Ascending aorta (tissue), 2 donors: ENCODE measurements at regions of chr12 and their contacts with region 1.

Region 1: GRCh38 chr12:110583137-110584059 is at the start of gene PPTC7:
- DNase-seq: peak; percentile 92 to 98
- H3K4me3 ChIP-seq: peak within 1 kb of the TSS; percentile 96 to 99
- H3K27ac ChIP-seq: peak within 1 kb of the TSS; percentile 85 to 96
- H3K4me1 ChIP-seq: peaks cover 8 to 38% of the 10 kb centered on the region in 2 donors
- H3K27me3 ChIP-seq: no peaks in the 10 kb centered on the region
- CTCF ChIP-seq: no peak
- total RNA-seq, gene PPTC7: 12.3 TPM

Region 2: DNA sequence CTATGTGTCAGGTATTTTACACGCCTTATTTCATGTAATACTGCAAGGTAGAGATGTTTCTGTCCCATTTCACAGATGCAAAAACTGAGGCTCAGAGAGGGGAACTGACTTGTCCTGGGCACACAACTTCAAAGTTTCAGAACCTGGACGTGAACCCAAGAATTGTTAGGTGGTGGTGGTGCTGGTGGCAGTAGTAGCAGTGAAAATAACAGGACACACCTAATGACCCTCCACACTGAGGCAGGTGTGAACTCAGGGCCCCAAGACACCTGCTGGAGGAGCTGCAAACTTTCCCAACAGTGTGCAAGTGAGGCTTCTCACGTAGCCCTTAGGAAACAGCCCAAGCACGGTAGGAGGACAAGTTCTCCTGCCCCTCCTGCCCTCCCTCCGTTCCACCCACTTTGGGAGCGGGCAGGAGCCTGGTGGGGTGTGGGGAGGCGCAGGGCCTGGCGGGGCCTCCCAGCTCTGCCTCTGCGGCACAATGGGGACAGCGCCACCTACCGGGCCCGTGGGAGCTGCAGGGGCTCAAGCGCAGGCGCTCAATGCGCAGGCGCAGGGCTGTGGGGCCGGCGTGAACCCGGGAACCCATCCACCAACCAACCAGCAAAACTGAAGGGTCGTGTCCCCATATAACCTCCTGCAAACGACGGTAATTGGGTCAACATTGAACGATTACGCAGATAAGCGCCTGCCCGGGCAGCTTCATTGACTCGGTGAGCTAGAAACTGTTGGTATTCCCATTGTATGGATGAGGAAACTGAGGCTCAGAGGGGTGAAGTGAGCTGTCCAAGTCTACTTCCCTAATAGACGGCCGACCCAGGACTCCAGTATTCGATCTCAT is 738.2 kb before region 1 on chr12:
- intact Hi-C with region 1: no loop called
- DNase-seq: peak; percentile 27 to 91
- H3K4me3 ChIP-seq: peak overlapping the region; percentile 25 to 34
- H3K27ac ChIP-seq: no peak overlapping the region
- H3K4me1 ChIP-seq: peaks cover 0 to 3% of the 10 kb centered on the region in 2 donors
- H3K27me3 ChIP-seq: no peaks in the 10 kb centered on the region
- CTCF ChIP-seq: peak; percentile 97 to 99 (median 98)

Region 3: DNA sequence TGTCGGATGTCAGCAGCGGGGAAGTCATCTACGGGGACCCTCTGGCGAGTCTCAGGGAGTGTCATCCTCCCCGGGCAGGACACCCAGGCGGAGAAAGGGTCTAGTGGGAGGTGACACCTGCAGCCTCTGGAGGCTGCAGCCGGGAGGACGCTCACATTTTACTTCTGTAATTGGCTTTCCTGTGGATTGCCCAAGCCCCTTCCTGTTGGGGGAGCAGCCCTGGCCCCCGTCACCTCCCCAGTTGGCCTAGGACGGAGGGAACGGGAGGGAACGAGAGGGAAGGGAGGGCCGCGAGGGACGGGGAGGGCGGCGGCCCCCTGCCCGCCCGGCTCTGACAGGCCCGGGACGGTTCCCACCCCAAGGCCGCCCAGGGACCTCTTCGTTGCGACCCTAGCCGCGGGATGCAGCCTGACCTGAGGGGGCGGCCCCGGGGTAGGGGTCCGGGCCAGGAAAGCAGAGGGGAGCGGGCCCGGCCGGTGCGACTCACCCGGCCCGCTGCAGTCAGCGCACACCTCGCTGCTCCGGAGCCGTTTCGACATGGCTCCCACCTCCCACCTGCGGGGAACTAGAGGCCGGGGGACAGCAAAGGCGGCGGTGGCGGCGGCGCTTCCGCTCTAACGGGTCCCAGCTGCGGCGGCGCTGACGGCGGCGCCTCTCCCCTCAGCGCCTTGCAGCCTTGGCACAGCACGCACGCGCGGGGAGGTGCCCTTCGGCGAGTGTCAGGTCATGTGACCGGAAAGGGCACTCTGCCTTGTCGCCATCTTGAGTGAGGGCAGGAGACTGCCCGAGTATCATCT is 587.5 kb before region 1 on chr12 and contains the start of gene GIT2:
- intact Hi-C with region 1: loop called (anchors 10 kb)
- DNase-seq: peak; percentile 79 to 97
- H3K4me3 ChIP-seq: peak within 1 kb of the TSS; percentile 75 to 98
- H3K27ac ChIP-seq: peak within 1 kb of the TSS; percentile 77 to 78
- H3K4me1 ChIP-seq: peaks cover 7 to 13% of the 10 kb centered on the region in 2 donors
- H3K27me3 ChIP-seq: no peaks in the 10 kb centered on the region
- CTCF ChIP-seq: no peak
- total RNA-seq, gene GIT2: 44.9 TPM

Region 4: DNA sequence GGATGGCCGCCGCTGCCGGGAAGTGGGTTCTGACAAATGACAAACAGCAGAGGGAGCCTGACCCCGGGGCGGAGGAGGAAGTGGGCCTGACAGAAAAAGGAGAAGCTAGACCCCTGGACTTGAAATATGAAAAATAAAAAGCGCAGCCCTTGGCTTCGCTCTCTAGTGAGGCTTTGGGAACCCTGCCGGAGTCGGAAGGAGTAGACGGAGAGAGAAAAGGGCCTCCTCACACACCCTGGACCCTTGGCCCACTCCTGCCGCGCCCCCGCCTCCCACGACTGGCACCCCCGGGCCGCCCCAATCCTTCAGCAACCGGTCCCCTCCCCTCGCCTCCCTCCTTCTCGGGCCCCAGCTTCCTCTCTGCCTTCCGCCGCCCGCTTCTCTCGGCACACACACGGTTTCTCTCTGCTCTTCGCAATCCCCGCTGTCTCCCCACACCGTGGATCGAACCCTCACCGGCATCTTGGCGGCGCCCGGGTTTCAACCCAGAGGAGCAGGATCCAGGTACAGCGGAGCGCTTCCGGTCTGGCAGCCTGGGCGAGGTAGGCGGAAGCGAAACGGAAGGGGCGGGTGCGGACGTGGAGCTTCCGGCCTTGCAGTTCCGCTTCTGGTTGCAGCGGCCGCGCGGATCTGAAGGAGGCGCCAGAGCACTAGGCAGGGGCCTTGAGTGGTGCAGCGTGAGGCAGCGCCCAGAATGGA is 133.4 kb before region 1 on chr12 and contains the start of gene ARPC3:
- intact Hi-C with region 1: loop called (anchors 5 kb)
- DNase-seq: peak; percentile 76 to 98
- H3K4me3 ChIP-seq: peak within 1 kb of the TSS; percentile 92 to 96
- H3K27ac ChIP-seq: peak within 1 kb of the TSS; percentile 92 to 98
- H3K4me1 ChIP-seq: peaks cover 4 to 17% of the 10 kb centered on the region in 2 donors
- H3K27me3 ChIP-seq: no peaks in the 10 kb centered on the region
- CTCF ChIP-seq: peak; percentile 90 to 95 (median 92)
- total RNA-seq, gene ARPC3: 76.5 TPM

Region 5: GRCh38 chr12:110501752-110502738 is 81.4 kb before region 1 on chr12 and contains the starts of genes RAD9B and VPS29:
- intact Hi-C with region 1: loop called (anchors 1 kb)
- DNase-seq: peak; percentile 96 to 99
- H3K4me3 ChIP-seq: peak within 1 kb of the TSS; percentile 75 to 82
- H3K27ac ChIP-seq: peak within 1 kb of the TSS; percentile 92
- H3K4me1 ChIP-seq: peaks cover 7 to 21% of the 10 kb centered on the region in 2 donors
- H3K27me3 ChIP-seq: no peaks in the 10 kb centered on the region
- CTCF ChIP-seq: no peak
- total RNA-seq, gene RAD9B: not detected
- total RNA-seq, gene VPS29: 35.9 TPM

Region 6: DNA sequence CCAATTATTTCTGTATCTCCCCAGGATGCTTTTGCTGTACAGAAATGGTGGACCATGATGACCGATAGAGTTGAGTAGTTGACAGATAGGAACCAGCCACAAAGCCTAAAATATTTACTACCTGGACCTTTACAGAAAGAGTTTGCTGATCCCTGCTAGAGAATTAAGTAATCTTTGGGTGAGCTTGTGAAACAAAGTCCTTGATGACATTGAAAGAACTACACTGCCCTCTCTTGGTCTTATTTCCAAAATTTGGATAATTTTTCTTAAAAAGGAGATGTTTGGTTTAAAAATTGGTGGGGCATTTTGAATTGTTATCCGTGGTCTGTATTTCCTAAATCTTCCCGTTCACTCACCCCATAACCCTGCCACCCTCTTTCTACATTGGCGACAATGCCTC is 16.9 kb after region 1 on chr12:
- intact Hi-C with region 1: loop called (anchors 2 kb)
- DNase-seq: no peak
- H3K4me3 ChIP-seq: no peak overlapping the region
- H3K27ac ChIP-seq: no peak overlapping the region
- H3K4me1 ChIP-seq: no peaks in the 10 kb centered on the region
- H3K27me3 ChIP-seq: no peaks in the 10 kb centered on the region
- CTCF ChIP-seq: peak; percentile 47 to 54 (median 48)